ENCODE measurements at regions of chr11 and their contacts with region 1.

Region 1: DNA sequence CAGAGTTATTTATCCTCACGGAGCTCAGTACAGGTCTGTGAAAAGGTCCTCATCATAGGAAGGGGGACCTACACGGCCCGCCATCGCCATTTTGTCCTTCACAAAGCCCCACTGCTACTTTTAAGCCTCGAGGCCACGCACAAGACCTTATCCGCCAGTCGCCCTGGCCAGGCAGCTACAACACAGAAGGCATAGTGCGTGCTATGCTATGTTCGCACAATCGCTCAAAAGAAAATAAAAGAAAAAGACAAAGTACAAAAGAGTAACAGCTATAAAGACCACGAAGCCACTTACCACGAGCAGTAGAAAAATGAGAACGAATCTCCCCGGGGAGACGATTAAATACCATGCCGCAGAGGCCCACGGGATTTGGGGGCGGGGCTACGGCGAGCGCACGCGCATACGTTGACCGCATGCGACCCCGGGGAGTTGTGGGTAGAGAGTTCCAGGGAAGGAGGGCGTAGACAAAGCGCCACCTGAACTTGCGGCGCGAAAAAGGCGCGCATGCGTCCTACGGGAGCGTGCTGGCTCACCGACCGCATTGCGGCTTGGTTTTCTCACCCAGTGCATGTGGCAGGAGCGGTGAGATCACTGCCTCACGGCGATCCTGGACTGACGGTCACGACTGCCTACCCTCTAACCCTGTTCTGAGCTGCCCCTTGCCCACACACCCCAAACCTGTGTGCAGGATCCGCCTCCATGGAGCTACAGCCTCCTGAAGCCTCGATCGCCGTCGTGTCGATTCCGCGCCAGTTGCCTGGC is 16.4 kb upstream of the WDR74 start:
- DNase-seq: peak; percentile 97
- H3K27ac ChIP-seq: peak overlapping the region; percentile 91
- CTCF ChIP-seq: no peak

Region 2: GRCh38 chr11:62841361-62842184 is 14.2 kb before region 1 on chr11:
- CTCF ChIA-PET with region 1: interaction called, 7 read pairs
- POLR2A ChIA-PET with region 1: interaction called, 20 read pairs
- DNase-seq: peak; percentile 95
- H3K27ac ChIP-seq: peak overlapping the region; percentile 100
- CTCF ChIP-seq: no peak

Region 3: DNA sequence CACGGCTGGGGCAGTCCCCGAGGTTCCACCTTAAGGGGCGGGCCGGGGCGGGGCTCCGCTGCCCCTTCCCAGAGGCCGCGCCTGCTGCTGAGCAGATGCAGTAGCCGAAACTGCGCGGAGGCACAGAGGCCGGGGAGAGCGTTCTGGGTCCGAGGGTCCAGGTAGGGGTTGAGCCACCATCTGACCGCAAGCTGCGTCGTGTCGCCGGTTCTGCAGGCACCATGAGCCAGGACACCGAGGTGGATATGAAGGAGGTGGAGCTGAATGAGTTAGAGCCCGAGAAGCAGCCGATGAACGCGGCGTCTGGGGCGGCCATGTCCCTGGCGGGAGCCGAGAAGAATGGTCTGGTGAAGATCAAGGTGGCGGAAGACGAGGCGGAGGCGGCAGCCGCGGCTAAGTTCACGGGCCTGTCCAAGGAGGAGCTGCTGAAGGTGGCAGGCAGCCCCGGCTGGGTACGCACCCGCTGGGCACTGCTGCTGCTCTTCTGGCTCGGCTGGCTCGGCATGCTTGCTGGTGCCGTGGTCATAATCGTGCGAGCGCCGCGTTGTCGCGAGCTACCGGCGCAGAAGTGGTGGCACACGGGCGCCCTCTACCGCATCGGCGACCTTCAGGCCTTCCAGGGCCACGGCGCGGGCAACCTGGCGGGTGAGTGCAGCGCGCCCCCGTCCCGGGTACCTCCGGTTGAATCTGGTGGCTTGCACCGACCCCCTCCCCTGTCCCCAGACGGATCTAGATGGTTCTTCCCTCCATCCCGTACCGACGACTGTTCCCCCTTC is 25.2 kb after region 1 on chr11 and contains the start of gene SLC3A2:
- CTCF ChIA-PET with region 1: no interaction called
- POLR2A ChIA-PET with region 1: interaction called, 12 read pairs
- DNase-seq: peak; percentile 89
- H3K27ac ChIP-seq: peak within 1 kb of the TSS; percentile 99
- CTCF ChIP-seq: peak; percentile 82

Measured in RWPE1 (cell line).